HAP-1 (cell line): ENCODE measurements at regions of chr2 and their contacts with region 1.

Region 1: DNA sequence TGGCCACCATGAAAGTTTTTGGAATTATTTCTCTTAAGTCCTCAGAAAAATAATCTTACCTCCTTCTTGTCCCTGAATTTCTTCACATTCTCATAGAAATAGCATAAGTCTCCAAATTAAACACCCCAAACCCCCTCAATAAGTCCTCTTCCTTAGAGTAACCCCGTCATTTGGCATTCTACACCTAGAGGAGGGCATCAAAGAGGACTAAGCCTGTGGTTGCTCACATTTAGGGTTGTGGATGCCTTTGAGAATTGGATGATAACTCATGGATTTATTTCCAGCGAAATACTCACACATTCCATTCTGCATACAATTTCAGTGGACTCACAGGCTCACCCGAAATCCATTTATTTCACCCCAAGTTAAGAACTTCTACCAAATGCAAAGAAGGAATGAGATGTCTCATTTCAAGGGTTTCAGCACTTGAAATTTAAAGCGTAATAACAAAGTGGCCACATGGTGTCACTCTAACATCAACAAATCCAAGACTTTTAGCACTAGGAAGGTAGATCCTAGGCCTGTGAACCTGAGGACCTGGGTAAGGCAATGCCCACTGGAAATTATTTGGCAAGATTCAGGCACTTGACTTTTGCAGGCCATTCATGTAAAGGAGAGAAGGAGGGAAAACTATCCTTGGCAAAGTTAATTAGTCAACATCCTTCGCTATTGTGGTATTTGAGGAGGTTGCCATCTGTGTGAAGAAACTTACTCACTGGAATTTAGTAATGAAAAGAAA is 24.6 kb downstream of the DYTN start:
- DNase-seq: peak; percentile 61 to 73
- H3K4me3 ChIP-seq: no peak overlapping the region
- H3K4me1 ChIP-seq: no peaks in the 10 kb centered on the region
- H3K27me3 ChIP-seq: no peaks in the 10 kb centered on the region

Region 2: DNA sequence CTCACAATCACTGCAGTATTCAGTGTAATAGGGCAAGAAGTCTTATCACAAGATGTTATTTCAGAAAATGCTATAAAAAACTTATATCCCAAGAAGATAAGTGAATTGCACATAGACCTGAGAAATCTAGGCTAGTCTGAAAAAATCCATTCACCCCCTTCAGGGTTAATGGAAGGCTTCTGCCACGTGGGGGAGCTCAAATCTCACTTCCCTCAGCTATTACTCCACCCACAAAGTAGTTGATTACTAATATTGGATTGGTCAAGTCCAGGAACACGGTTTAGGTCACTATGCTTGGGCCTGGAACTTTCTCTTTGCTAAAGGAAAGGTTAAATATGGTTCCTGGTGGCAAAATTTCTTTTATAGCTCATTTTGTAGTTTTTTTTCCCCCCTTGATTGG is 301.4 kb before region 1 on chr2:
- in situ Hi-C with region 1: loop called (anchors 25 kb)
- DNase-seq: peak; percentile 60 to 70
- H3K4me3 ChIP-seq: no peak overlapping the region
- H3K4me1 ChIP-seq: no peaks in the 10 kb centered on the region
- H3K27me3 ChIP-seq: no peaks in the 10 kb centered on the region

Region 3: GRCh38 chr2:206597717-206598218 is 95.8 kb before region 1 on chr2:
- in situ Hi-C with region 1: no loop called
- DNase-seq: peak in 1 of 2 experiments; percentile 38
- H3K4me3 ChIP-seq: no peak overlapping the region
- H3K4me1 ChIP-seq: peaks cover 19% of the 10 kb centered on the region
- H3K27me3 ChIP-seq: no peaks in the 10 kb centered on the region

Region 4: GRCh38 chr2:206784559-206785353 is 91.2 kb after region 1 on chr2:
- in situ Hi-C with region 1: loop called (anchors 5 kb)
- DNase-seq: no peak
- H3K4me3 ChIP-seq: no peak overlapping the region
- H3K4me1 ChIP-seq: no peaks in the 10 kb centered on the region
- H3K27me3 ChIP-seq: no peaks in the 10 kb centered on the region

Region 5: DNA sequence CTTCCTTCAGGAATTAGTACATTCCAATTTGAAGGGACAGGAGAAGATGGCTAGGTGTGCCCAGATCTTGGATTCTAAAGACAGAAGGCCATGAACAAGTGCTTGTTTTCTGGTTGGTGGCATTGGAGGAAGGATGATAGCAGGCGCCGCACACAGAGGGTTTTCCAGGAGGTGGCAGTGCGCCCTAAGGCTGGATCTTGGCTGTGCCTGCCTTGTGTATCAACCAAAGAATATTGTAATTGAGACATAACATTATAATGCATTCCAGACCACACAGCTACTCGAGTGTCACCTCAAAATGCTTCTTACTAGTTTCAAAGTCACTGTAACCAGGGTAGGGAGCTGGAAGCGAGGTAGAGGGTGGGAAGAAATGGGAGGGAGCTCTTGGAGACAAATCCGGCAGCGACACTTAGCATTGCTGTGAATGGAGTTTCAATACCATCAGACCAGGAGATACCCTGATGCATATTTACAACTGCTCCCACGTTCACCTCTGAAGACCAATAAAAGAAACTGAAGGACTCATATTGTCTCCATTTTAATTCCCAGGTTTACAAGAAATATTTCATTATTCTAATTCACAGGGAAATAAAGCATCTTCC is 288.3 kb after region 1 on chr2:
- in situ Hi-C with region 1: loop called (anchors 10 kb)
- DNase-seq: peak; percentile 77 to 83
- H3K4me3 ChIP-seq: no peak overlapping the region
- H3K4me1 ChIP-seq: peaks cover 23% of the 10 kb centered on the region
- H3K27me3 ChIP-seq: no peaks in the 10 kb centered on the region

Region 6: DNA sequence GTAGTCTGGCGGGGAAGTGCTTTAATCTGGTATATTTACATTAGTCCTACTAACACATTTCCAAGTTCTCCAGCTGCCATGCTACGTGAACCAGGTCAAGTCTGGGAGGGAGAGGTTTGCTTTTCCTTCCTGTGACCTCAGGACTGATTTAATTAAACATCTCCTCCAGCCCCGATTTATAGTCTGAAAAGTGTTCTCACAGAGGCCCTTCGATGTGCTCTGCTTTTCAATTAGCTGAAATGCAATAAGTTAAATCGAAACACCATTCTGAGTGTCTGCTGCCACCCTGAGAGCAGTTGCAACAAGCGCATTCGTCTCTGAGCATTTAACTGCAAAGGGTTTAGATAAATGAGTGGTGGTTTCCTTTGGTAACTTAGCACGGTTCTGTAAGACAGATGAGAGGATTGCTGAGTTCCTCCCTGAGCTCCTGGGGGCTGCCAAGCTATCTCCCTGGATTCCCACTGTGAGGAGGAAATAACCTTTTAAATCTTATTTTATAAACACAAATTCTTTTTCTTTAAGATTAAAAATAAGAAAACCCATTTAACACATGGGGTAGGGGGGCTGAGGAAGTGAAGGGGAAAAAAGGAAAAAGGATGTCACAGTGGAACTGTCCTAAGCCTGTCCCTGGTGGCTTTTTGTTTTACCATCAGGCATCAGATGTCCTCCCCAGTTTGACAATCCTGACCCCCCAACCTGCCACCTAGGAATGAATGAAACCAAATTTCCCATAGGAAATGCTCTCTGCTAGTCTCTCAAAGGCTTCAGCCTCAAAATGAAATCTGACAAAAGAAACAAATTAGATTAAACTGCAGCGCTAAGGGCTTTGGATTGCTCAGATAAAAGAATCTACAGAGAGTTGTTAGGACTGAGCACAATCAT is 779.7 kb after region 1 on chr2:
- in situ Hi-C with region 1: loop called (anchors 10 kb)
- DNase-seq: peak; percentile 60 to 64
- H3K4me3 ChIP-seq: no peak overlapping the region
- H3K4me1 ChIP-seq: no peaks in the 10 kb centered on the region
- H3K27me3 ChIP-seq: no peaks in the 10 kb centered on the region

Region 7: GRCh38 chr2:207854484-207855440 is 1161.2 kb after region 1 on chr2:
- in situ Hi-C with region 1: no loop called
- DNase-seq: no peak
- H3K4me3 ChIP-seq: no peak overlapping the region
- H3K4me1 ChIP-seq: peaks cover 21% of the 10 kb centered on the region
- H3K27me3 ChIP-seq: no peaks in the 10 kb centered on the region